H1 (cell line): ENCODE measurements at regions of chr9 and their contacts with region 1.

Region 1: DNA sequence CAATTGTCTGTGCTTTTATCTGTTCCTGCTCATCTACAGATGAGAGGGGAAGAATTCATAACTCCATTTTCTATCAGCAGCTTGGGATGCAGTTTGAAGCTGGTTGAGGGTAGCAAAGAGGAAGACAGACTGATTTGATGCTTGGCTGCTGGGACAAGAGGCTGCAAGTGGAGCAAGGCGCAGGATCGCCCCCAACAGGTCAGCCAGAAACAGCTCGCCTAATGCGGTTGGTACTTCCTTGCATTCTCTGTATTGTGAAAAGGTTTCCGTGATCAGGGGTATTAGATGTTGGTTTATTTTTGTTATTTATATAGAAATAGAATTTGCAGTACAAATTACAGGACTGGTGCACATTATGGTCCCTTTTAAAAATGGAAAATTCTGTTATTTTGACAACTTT is 40.6 kb downstream of the ZNF883 start:
- DNase-seq: peak; percentile 3 to 54
- H3K4me3 ChIP-seq: no peak overlapping the region
- H3K27ac ChIP-seq: no peak overlapping the region
- H3K4me1 ChIP-seq: no peaks in the 10 kb centered on the region
- H3K27me3 ChIP-seq: peaks cover 0 to 5% (median 0%) of the 10 kb centered on the region in 4 experiments; a peak in 3 of 7 replicates
- CTCF ChIP-seq: peak; percentile 74 to 91 (median 83)
- EP300 ChIP-seq: no peak
- POLR2A ChIP-seq: no peak
- RAD21 ChIP-seq: peak; percentile 68 to 77

Region 2: DNA sequence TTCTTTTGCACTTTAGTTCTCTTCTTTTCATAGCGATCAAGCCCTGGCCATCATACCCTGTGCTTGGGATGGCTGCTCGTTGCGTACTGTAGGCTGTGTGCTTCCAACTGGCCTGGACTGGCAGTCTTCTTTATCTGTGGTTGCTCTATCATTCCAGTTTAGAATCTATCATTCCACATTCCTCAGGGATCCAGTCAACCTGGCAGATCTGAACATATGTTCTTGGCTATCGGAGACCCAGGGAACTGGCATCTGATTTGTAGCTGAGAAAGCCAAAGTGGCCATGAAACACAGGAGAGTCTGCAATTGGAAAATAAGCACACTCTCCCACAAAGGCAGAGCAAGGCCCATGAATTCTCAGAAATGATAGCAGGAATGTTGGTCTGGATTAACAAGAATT is 58.1 kb before region 1 on chr9:
- CTCF ChIA-PET with region 1: no interaction called
- POLR2A ChIA-PET with region 1: no interaction called
- DNase-seq: no peak
- H3K4me3 ChIP-seq: no peak overlapping the region
- H3K27ac ChIP-seq: no peak overlapping the region
- H3K4me1 ChIP-seq: no peaks in the 10 kb centered on the region
- H3K27me3 ChIP-seq: peaks cover 0 to 3% (median 0%) of the 10 kb centered on the region in 4 experiments; a peak in 1 of 7 replicates
- CTCF ChIP-seq: no peak
- EP300 ChIP-seq: no peak
- POLR2A ChIP-seq: no peak
- RAD21 ChIP-seq: no peak

Region 3: GRCh38 chr9:112939418-112939817 is 32.0 kb before region 1 on chr9:
- CTCF ChIA-PET with region 1: interaction called, 55 read pairs
- POLR2A ChIA-PET with region 1: no interaction called
- DNase-seq: no peak
- H3K4me3 ChIP-seq: no peak overlapping the region
- H3K27ac ChIP-seq: no peak overlapping the region
- H3K4me1 ChIP-seq: no peaks in the 10 kb centered on the region
- H3K27me3 ChIP-seq: peaks cover 0 to 15% (median under 1%) of the 10 kb centered on the region in 4 experiments; a peak in 3 of 7 replicates
- CTCF ChIP-seq: no peak
- EP300 ChIP-seq: no peak
- POLR2A ChIP-seq: no peak
- RAD21 ChIP-seq: no peak

Region 4: DNA sequence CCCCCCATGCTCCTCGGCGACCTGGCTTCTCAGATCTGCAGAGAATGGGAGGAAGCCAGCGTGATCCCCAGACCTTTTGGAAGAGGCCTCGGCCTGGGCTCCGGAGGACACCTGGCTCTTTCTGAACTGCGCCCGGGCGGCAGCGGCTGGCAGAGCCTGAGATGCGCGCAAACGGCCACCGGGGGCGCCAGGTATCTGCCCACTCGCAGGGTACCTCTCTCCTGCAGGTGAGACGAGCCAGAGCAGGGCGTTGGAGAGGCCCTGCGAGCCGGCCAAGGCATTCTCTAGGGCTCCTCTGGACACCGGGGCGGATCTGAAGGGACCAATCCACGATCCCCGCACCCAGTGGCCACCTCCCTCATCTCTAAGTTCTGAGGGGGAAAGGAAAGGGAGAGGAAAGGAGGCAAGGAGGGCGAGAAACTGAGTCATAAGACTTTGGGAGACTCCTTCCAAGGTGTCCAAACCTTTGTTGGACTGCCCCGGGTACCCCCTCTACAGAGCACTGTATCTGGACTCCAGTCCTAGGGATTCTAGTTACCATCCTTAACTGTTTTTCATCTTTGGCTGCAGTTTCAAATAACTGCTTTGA is 25.7 kb before region 1 on chr9:
- CTCF ChIA-PET with region 1: interaction called, 55 read pairs
- POLR2A ChIA-PET with region 1: no interaction called
- DNase-seq: peak; percentile 41 to 94
- H3K4me3 ChIP-seq: no peak overlapping the region
- H3K27ac ChIP-seq: no peak overlapping the region
- H3K4me1 ChIP-seq: no peaks in the 10 kb centered on the region
- H3K27me3 ChIP-seq: peaks cover 0 to 3% (median under 1%) of the 10 kb centered on the region in 4 experiments; a peak in 3 of 7 replicates
- CTCF ChIP-seq: peak; percentile 90 to 98 (median 91)
- EP300 ChIP-seq: no peak
- POLR2A ChIP-seq: no peak
- RAD21 ChIP-seq: peak; percentile 61 to 71

Region 5: GRCh38 chr9:112955550-112955949 is 15.9 kb before region 1 on chr9:
- CTCF ChIA-PET with region 1: interaction called, 15 read pairs
- POLR2A ChIA-PET with region 1: interaction called, 3 read pairs
- DNase-seq: no peak
- H3K4me3 ChIP-seq: no peak overlapping the region
- H3K27ac ChIP-seq: no peak overlapping the region
- H3K4me1 ChIP-seq: no peaks in the 10 kb centered on the region
- H3K27me3 ChIP-seq: peaks cover 0 to 2% (median 0%) of the 10 kb centered on the region in 4 experiments; a peak in 1 of 7 replicates
- CTCF ChIP-seq: no peak
- EP300 ChIP-seq: no peak
- POLR2A ChIP-seq: no peak
- RAD21 ChIP-seq: no peak